Transverse colon (tissue), 4 donors: ENCODE measurements at regions of chr9 and their contacts with region 1.

Region 1: DNA sequence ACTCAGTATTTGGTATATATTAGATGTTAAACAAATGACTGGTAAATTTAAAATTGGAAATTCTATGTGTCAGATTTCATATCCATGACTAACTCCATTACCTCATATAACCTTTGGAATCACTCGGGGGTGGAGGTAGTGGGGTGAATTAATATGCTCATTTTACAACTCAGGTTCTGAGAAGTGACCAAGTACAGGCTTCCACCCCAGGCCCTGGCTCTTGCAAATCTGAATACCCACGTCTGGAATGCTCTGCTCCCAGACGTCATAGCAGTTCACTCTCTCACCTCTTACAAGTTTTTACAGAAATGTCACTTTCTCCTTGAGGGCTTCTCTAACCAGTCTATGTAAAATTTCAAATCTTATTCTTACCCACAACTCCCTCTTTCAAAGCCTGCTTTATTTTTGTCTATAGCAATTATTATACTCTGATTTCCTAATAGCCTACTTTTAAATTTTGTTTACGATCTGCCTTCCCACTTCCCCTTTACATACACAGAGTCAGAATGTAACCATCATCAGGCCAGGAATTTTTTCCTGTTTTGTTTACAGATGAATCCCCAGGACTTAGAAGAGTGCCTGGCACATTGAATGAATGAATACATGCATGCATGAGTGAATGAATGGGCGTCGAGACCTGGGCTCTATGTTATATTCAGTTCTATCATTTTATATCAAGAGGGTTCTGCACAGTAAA is 134.1 kb upstream of the IFNE start:
- DNase-seq: no peak
- H3K4me3 ChIP-seq: no peak overlapping the region
- H3K27ac ChIP-seq: no peak overlapping the region
- H3K4me1 ChIP-seq: no peaks in the 10 kb centered on the region
- H3K27me3 ChIP-seq: no peaks in the 10 kb centered on the region
- CTCF ChIP-seq: no peak
- EP300 ChIP-seq: no peak
- POLR2A ChIP-seq: no peak

Region 2: GRCh38 chr9:21443849-21444625 is 172.2 kb before region 1 on chr9:
- in situ Hi-C with region 1: no loop called
- intact Hi-C with region 1: loop called (anchors 5 kb)
- DNase-seq: no peak
- H3K4me3 ChIP-seq: no peak overlapping the region
- H3K27ac ChIP-seq: no peak overlapping the region
- H3K4me1 ChIP-seq: peaks cover 0 to 8% (median 0%) of the 10 kb centered on the region in 4 donors
- H3K27me3 ChIP-seq: no peaks in the 10 kb centered on the region
- CTCF ChIP-seq: no peak
- EP300 ChIP-seq: no peak
- POLR2A ChIP-seq: no peak

Region 3: GRCh38 chr9:21465859-21466518 is 150.2 kb before region 1 on chr9:
- in situ Hi-C with region 1: no loop called
- intact Hi-C with region 1: no loop called
- DNase-seq: no peak
- H3K4me3 ChIP-seq: no peak overlapping the region
- H3K27ac ChIP-seq: no peak overlapping the region
- H3K4me1 ChIP-seq: no peaks in the 10 kb centered on the region
- H3K27me3 ChIP-seq: peaks cover 17% of the 10 kb centered on the region
- CTCF ChIP-seq: peak; percentile 41 to 66 (median 55)
- EP300 ChIP-seq: no peak
- POLR2A ChIP-seq: no peak